Tibial artery (tissue), 4 donors: ENCODE measurements at regions of chr12 and their contacts with region 1.

Region 1: GRCh38 chr12:4555804-4556203 is 6.2 kb upstream of the DYRK4 start:
- DNase-seq: no peak
- H3K4me3 ChIP-seq: no peak overlapping the region
- H3K27ac ChIP-seq: no peak overlapping the region
- H3K4me1 ChIP-seq: no peaks in the 10 kb centered on the region
- H3K27me3 ChIP-seq: no peaks in the 10 kb centered on the region
- CTCF ChIP-seq: no peak

Region 2: DNA sequence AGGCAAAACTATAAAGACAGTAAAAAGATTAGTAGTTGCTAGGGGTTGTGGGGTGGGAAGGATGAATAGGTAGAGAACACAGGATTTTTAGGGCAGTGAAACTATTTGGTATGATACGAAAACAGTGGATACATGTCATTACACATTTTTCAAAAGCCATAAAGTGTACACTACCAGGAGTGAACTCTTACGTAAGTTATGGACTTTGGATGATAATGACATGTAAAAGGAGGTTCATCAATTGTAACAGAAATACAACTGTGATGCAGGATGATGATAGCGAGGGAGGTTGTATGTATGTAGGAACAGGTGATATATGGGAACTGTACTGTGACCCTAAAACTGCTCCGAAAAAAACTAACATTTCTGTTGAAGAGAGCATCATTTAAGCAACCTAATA is 95.0 kb before region 1 on chr12:
- intact Hi-C with region 1: loop called (anchors 5 kb)
- DNase-seq: no peak
- H3K4me3 ChIP-seq: no peak overlapping the region
- H3K27ac ChIP-seq: no peak overlapping the region
- H3K4me1 ChIP-seq: no peaks in the 10 kb centered on the region
- H3K27me3 ChIP-seq: no peaks in the 10 kb centered on the region
- CTCF ChIP-seq: no peak